ENCODE measurements at regions of chr10 and their contacts with region 1.

Region 1: GRCh38 chr10:88256013-88256680 is 327.0 kb downstream of the RNLS start:
- DNase-seq: peak in 1 of 2 donors; percentile 91
- H3K4me3 ChIP-seq: peak overlapping the region in 1 of 2 donors; percentile 4
- H3K27ac ChIP-seq: peak overlapping the region; percentile 79
- H3K4me1 ChIP-seq: peaks cover 31% of the 10 kb centered on the region
- H3K27me3 ChIP-seq: no peaks in the 10 kb centered on the region
- CTCF ChIP-seq: no peak
- POLR2A ChIP-seq: no peak

Region 2: DNA sequence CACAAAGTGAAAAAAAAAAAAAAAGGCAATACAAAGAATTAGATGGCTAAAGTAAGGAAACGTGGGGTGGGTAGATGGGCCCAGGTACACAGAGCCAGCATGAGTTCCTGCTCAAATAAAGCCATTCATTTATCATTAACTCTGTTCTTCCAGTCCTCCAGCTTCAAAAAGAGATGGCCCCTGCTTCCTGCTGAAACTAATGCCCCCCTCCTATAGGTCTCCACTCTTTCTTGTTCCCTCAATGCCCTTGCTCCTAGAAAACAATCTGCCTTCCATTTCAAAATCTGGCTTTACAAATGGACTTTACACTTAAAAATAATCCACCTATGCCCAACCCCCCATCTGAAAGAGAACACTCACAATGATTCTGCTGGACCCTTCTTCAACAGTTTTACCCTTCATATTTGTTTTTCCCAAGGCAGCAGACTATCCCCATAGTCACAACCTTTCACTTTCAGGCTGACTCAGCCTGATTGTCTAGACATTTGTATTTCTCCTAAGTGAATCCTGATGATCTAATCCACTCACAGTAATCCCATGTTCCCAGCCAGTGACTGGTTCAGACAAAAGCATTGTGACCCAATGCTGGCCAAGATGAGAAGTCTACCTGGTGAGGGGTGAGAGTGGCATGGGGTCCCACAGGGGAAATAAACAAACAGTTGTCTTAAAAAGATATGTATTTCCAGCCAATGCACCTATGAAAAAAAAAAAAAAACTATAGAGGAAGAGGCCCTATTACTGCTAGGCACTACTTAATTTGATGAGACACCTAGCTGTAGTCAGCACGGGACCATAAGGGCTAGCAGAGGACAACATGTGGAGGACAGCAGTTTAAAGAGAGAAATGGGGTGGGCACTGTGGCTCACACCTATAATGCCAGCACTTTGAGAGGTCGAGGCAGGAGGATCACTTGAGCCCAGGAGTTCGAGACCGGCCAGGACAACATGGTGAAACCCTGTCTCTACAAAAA is 1815.0 kb before region 1 on chr10:
- intact Hi-C with region 1: no loop called
- DNase-seq: no peak
- H3K4me3 ChIP-seq: no peak overlapping the region
- H3K27ac ChIP-seq: no peak overlapping the region
- H3K4me1 ChIP-seq: no peaks in the 10 kb centered on the region
- H3K27me3 ChIP-seq: no peaks in the 10 kb centered on the region
- CTCF ChIP-seq: no peak
- POLR2A ChIP-seq: no peak

Region 3: GRCh38 chr10:88157981-88158465 is 98.1 kb before region 1 on chr10:
- intact Hi-C with region 1: loop called (anchors 5 kb)
- DNase-seq: no peak
- H3K4me3 ChIP-seq: no peak overlapping the region
- H3K27ac ChIP-seq: peak overlapping the region; percentile 82
- H3K4me1 ChIP-seq: peaks cover 26% of the 10 kb centered on the region
- H3K27me3 ChIP-seq: no peaks in the 10 kb centered on the region
- CTCF ChIP-seq: no peak
- POLR2A ChIP-seq: no peak

Region 4: GRCh38 chr10:88194041-88194887 is 61.9 kb before region 1 on chr10:
- intact Hi-C with region 1: no loop called
- DNase-seq: no peak
- H3K4me3 ChIP-seq: no peak overlapping the region
- H3K27ac ChIP-seq: peak overlapping the region; percentile 54
- H3K4me1 ChIP-seq: peaks cover 14% of the 10 kb centered on the region
- H3K27me3 ChIP-seq: no peaks in the 10 kb centered on the region
- CTCF ChIP-seq: no peak
- POLR2A ChIP-seq: no peak

Measured in vagina (tissue), 2 donors.